Activated CD4-positive, alpha-beta T cell treated with anti-CD3 and anti-CD28 coated beads for 36 hours (primary cell): ENCODE measurements at regions of chr14 and their contacts with region 1.

Region 1: DNA sequence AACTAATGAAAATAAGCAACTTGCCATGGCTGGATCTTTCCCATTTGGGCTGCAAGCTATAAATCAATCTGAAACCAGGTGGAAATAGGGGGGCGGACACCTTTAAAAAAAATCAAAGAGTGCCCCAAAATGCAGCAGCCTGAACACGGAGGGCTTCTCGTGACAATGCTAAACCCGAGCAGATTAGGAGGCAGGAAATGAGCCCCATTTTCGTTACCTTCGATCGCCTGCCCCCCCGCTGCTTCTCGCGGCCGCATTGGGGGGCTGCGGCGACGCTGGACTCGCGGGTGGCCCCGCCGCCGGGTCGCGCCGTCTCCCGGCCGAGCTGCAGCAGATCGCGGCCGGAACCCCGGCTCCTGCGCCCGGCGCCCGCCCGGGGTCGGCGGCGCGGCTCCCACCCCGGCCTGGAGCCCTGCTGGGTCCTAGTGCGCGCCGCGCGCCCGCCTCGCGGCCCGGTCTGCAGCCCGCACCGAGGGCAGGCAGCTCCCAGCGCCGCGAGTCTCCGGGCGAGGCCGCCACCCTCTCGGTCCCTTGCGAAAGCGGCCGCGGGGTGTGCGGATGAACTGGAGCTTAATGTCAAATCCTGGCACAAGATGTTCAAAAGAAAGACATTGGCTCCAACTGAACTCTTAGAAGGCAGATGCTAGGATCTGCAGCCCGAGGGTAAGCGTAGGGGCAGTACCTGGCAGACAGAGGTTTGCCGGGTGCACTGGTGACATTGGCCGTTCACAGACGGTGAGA is 201.9 kb upstream of the FOXN3 start:
- DNase-seq: peak; percentile 82
- ATAC-seq: peak; percentile 38
- H3K4me3 Mint-ChIP-seq: peak overlapping the region; percentile 95
- H3K27ac Mint-ChIP-seq: peak overlapping the region; percentile 94
- H3K4me1 Mint-ChIP-seq: peaks cover 70% of the 10 kb centered on the region
- H3K27me3 Mint-ChIP-seq: no peaks in the 10 kb centered on the region

Region 2: DNA sequence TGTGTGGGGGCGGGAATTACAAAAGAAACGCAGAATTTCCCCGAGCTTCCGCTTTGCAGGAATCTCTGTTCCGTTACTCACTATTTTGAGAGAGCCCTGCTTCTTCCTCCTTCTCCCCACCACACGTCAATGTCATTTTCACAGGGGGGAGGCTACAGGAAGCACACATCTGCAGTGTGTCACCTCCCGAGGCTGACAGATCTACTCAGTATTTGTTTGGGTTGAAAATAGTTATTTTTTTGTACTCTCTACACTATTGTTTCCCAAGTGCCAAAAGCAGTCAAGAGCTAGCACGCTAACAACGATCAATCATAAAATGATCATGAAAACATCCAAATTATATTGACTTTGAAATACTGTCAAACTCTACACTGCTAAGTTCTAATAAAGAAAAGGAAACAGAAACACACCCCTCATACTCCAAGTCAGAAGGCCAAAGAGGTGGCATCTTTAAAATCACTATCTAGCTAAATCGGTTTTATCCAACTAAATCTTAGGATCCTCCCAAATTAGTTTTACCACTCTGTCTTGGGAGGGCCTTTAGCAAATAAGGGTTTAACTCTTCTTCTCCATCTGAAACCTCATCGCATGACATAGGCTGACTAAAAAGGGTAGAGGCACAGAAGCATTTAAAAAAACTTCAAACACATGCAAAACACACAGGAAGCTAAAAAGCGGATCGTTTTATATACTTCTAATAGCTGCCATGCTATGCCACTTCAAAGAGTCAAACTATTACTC is 253.8 kb before region 1 on chr14:
- CTCF ChIA-PET with region 1: no interaction called
- POLR2A ChIA-PET with region 1: no interaction called
- intact Hi-C with region 1: loop called (anchors 1 to 2 kb)
- DNase-seq: peak; percentile 72
- ATAC-seq: peak; percentile 92
- H3K4me3 Mint-ChIP-seq: peak overlapping the region; percentile 70
- H3K27ac Mint-ChIP-seq: peak overlapping the region; percentile 97
- H3K4me1 Mint-ChIP-seq: peaks cover 62% of the 10 kb centered on the region
- H3K27me3 Mint-ChIP-seq: no peaks in the 10 kb centered on the region

Region 3: GRCh38 chr14:89445273-89445973 is 173.6 kb before region 1 on chr14:
- CTCF ChIA-PET with region 1: interaction called, 3 read pairs
- POLR2A ChIA-PET with region 1: interaction called, 10 read pairs
- intact Hi-C with region 1: no loop called
- DNase-seq: peak; percentile 61
- ATAC-seq: peak; percentile 88
- H3K4me3 Mint-ChIP-seq: no peak overlapping the region
- H3K27ac Mint-ChIP-seq: peak overlapping the region; percentile 89
- H3K4me1 Mint-ChIP-seq: peaks cover 67% of the 10 kb centered on the region
- H3K27me3 Mint-ChIP-seq: no peaks in the 10 kb centered on the region

Region 4: GRCh38 chr14:89641495-89642175 is 22.7 kb after region 1 on chr14:
- CTCF ChIA-PET with region 1: interaction called, 3 read pairs
- POLR2A ChIA-PET with region 1: interaction called, 6 read pairs
- intact Hi-C with region 1: loop called (anchors 1 kb)
- DNase-seq: peak; percentile 45
- ATAC-seq: peak; percentile 96
- H3K4me3 Mint-ChIP-seq: peak overlapping the region; percentile 46
- H3K27ac Mint-ChIP-seq: peak overlapping the region; percentile 91
- H3K4me1 Mint-ChIP-seq: peaks cover 59% of the 10 kb centered on the region
- H3K27me3 Mint-ChIP-seq: no peaks in the 10 kb centered on the region

Region 5: GRCh38 chr14:89720741-89721315 is 101.8 kb after region 1 on chr14:
- CTCF ChIA-PET with region 1: no interaction called
- POLR2A ChIA-PET with region 1: interaction called, 3 read pairs
- intact Hi-C with region 1: loop called in 1 of 2 experiments (anchors 2 kb)
- DNase-seq: peak; percentile 72
- ATAC-seq: peak; percentile 82
- H3K4me3 Mint-ChIP-seq: peak overlapping the region; percentile 37
- H3K27ac Mint-ChIP-seq: peak overlapping the region; percentile 96
- H3K4me1 Mint-ChIP-seq: peaks cover 74% of the 10 kb centered on the region
- H3K27me3 Mint-ChIP-seq: no peaks in the 10 kb centered on the region

Region 6: DNA sequence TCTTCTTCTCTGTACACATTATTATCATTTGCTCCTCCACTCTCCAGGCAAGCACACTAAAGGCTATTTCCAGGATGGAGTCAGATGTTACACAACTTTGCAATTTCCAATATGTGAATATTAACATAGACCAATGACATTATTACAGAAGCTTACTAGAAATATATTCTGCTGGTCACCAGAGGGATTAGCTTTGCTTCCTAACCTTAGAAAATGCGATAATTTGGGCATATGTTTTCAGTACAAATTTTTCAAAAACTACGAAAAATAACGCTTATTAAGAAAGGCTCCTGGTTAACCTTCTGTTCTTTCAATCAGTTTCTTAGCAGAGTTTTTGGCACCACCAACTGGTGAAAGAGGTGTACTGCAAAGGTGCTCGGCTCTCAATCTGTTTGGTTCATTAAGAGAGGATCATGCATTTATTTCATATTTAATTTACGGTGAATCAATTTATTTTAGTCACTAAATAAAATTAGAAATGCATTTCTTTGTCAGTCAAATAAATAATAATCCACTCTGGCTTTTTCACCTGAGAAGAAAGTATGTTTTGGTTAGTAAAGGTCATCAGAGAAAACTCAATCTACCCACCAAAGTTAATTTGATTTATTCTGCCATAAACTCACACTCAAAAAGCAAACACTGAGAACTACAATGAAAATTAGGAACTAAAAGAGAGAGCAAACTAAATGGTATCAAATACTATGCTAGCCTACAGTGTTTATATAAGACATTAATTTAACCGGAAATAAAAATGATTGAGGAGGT is 296.3 kb after region 1 on chr14:
- CTCF ChIA-PET with region 1: no interaction called
- POLR2A ChIA-PET with region 1: no interaction called
- intact Hi-C with region 1: loop called in 1 of 2 experiments (anchors 10 kb)
- DNase-seq: peak; percentile 73
- ATAC-seq: no peak
- H3K4me3 Mint-ChIP-seq: no peak overlapping the region
- H3K27ac Mint-ChIP-seq: no peak overlapping the region
- H3K4me1 Mint-ChIP-seq: peaks cover 3% of the 10 kb centered on the region
- H3K27me3 Mint-ChIP-seq: peaks cover 3% of the 10 kb centered on the region

Region 7: GRCh38 chr14:90109646-90110257 is 490.8 kb after region 1 on chr14:
- CTCF ChIA-PET with region 1: no interaction called
- POLR2A ChIA-PET with region 1: no interaction called
- intact Hi-C with region 1: no loop called
- DNase-seq: peak; percentile 17
- ATAC-seq: no peak
- H3K4me3 Mint-ChIP-seq: no peak overlapping the region
- H3K27ac Mint-ChIP-seq: no peak overlapping the region
- H3K4me1 Mint-ChIP-seq: no peaks in the 10 kb centered on the region
- H3K27me3 Mint-ChIP-seq: peaks cover 11% of the 10 kb centered on the region

Region 8: GRCh38 chr14:90687680-90688079 is 1068.7 kb after region 1 on chr14:
- CTCF ChIA-PET with region 1: no interaction called
- POLR2A ChIA-PET with region 1: no interaction called
- intact Hi-C with region 1: loop called in 1 of 2 experiments (anchors 5 kb)
- DNase-seq: no peak
- ATAC-seq: no peak
- H3K4me3 Mint-ChIP-seq: no peak overlapping the region
- H3K27ac Mint-ChIP-seq: no peak overlapping the region
- H3K4me1 Mint-ChIP-seq: no peaks in the 10 kb centered on the region
- H3K27me3 Mint-ChIP-seq: no peaks in the 10 kb centered on the region